GM12878 (cell line): ENCODE measurements at regions of chr2 and their contacts with region 1.

Region 1: GRCh38 chr2:69804416-69804815 is 25.0 kb upstream of the GMCL1 start:
- DNase-seq: no peak
- ATAC-seq: no peak
- H3K4me3 ChIP-seq: no peak overlapping the region
- H3K27ac ChIP-seq: peak overlapping the region; percentile 0; the same call in 1 of the 2 replicates
- H3K4me1 ChIP-seq: peaks cover 47% of the 10 kb centered on the region
- H3K27me3 ChIP-seq: no peaks in the 10 kb centered on the region
- CTCF ChIP-seq: no peak
- EP300 ChIP-seq: no peak
- POLR2A ChIP-seq: no peak
- RAD21 ChIP-seq: no peak

Region 2: DNA sequence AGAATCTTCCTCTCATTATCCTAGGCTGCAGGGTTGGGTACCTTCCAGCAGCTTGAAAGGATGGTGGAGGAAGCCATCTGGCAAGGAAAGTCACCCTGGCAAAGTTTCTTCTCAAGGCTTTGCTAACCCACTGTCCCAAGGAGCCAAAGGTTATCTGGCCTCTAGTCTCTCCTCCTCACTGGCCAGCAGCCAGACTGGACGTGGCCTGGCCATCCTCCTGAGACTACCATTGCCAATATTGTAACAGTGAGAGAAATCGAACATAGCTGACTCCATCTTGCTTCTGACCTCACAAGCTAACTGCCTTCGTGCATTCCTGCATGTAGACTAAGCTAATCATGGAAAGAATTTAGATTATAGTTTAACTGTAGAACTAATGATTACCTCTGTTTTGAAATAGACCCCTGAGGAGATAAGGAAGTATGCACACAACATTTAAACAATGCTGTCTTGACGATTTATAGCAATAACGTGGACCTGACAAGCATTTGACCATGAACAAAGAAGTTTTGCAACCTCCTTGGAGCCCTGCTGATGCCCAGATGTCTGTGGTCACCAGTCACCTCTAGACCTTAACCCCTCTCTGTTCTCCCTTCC is 70.3 kb before region 1 on chr2:
- CTCF ChIA-PET with region 1: interaction called, 6 read pairs
- POLR2A ChIA-PET with region 1: interaction called, 6 read pairs
- RAD21 ChIA-PET with region 1: interaction called, 6 read pairs
- SMC1A ChIA-PET with region 1: interaction called, 11 read pairs
- in situ Hi-C with region 1: no loop called
- intact Hi-C with region 1: no loop called
- DNase-seq: no peak
- ATAC-seq: no peak
- H3K4me3 ChIP-seq: no peak overlapping the region
- H3K27ac ChIP-seq: no peak overlapping the region
- H3K4me1 ChIP-seq: peaks cover 20% of the 10 kb centered on the region
- H3K27me3 ChIP-seq: no peaks in the 10 kb centered on the region
- CTCF ChIP-seq: no peak
- EP300 ChIP-seq: no peak
- POLR2A ChIP-seq: no peak
- RAD21 ChIP-seq: no peak

Region 3: DNA sequence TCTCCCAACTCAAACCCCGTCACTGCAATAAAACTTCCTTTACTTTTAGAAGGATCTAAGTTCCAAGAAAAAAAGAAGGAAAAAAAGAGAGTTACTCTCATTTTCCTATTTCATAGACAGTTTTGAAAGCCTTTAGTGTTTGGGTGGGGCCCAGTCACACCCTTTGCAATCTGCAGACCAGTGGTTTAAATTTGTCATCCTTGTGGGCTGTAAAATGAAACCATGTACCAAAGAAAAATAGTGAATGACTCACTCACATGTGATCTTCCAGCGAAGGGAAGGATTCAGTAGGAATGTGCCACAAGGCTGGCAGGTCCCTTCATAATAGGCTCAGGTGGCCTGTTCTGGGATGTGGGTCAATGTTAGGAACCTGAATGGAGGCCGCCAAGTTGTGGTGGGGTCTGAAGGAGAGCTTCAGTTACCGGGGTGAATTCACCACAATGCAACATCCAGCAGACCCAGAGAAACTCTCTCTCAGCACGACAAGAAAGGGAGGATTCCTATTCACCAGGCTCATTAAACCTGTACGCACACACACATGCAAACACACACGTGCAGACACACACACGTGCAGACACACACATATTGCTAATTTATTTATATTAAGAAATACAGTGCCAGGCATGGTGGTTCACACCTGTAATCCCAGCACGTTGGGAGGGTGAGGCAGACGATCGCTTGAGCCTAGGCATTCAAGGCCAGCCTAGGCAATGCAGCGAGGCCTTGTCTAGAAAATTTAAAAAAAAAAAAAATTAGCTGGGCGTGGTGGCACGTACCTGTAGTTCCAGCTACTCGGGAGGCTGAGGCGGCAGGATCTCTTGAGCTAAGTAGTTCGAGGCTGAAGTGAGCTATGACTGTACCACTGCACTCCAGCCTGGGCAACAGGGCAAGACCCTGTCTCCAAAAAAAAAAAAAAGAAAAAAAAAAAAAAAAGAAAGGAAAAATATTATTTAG is 33.9 kb before region 1 on chr2:
- CTCF ChIA-PET with region 1: interaction called, 7 read pairs
- POLR2A ChIA-PET with region 1: interaction called, 17 read pairs
- RAD21 ChIA-PET with region 1: interaction called, 33 read pairs
- SMC1A ChIA-PET with region 1: interaction called, 16 read pairs
- in situ Hi-C with region 1: no loop called
- intact Hi-C with region 1: no loop called
- DNase-seq: no peak
- ATAC-seq: peak; percentile 62
- H3K4me3 ChIP-seq: no peak overlapping the region
- H3K27ac ChIP-seq: no peak overlapping the region
- H3K4me1 ChIP-seq: peaks cover 60% of the 10 kb centered on the region
- H3K27me3 ChIP-seq: no peaks in the 10 kb centered on the region
- CTCF ChIP-seq: no peak
- EP300 ChIP-seq: no peak
- POLR2A ChIP-seq: no peak
- RAD21 ChIP-seq: no peak

Region 4: GRCh38 chr2:69781321-69782248 is 22.8 kb before region 1 on chr2:
- CTCF ChIA-PET with region 1: interaction called, 5 read pairs
- POLR2A ChIA-PET with region 1: interaction called, 17 read pairs
- RAD21 ChIA-PET with region 1: interaction called, 33 read pairs
- SMC1A ChIA-PET with region 1: interaction called, 16 read pairs
- in situ Hi-C with region 1: no loop called
- intact Hi-C with region 1: no loop called
- DNase-seq: no peak
- ATAC-seq: peak; percentile 88
- H3K4me3 ChIP-seq: 0 out of 2 replicates have a peak overlapping the region, but pooled peaks have one; percentile 21
- H3K27ac ChIP-seq: peak overlapping the region; percentile 42
- H3K4me1 ChIP-seq: peaks cover 14% of the 10 kb centered on the region
- H3K27me3 ChIP-seq: no peaks in the 10 kb centered on the region
- CTCF ChIP-seq: no peak
- EP300 ChIP-seq: no peak
- POLR2A ChIP-seq: no peak
- RAD21 ChIP-seq: no peak